HCT116 (cell line): ENCODE measurements at regions of chr7 and their contacts with region 1.

Region 1: DNA sequence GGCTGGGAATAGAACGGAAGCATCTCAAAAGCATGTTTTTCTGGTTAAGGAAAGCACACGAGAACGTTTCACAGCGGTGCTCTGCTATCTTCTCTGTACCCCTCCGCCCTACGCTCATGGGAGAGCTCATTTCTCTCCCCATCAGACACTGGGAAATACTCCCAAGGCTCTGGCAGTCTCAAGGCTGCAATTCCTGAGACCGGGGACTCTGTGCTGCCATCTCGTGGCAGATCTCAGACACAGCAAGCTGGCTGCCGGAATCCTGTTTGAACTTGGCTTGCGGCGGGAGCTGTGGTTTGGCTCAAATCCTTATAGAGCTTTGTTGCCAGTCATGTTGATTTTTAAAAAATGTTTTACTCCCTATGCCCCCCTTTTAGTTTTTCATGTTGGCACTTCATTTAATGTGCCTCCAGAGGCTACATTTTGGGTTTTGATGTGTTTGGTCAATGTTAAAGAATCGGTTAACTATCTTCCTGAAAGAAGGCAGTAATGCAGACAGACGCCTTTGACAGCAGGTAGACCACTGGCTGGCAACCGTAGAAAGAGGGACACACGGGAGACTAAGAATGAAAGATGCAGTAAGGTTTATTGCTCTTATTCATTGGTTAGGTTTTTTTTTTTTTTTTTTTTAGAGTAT is 27.6 kb downstream of the BMPER start:
- DNase-seq: peak; percentile 66
- ATAC-seq: peak; percentile 95
- H3K4me3 ChIP-seq: no peak overlapping the region; a peak in 1 of 4 replicates
- H3K27ac ChIP-seq: no peak overlapping the region
- H3K4me1 ChIP-seq: peaks cover 3 to 8% of the 10 kb centered on the region in 2 experiments; a peak in 3 of 4 replicates
- H3K27me3 ChIP-seq: no peaks in the 10 kb centered on the region; the same call in 1 of the 2 replicates
- CTCF ChIP-seq: peak; percentile 64 to 96 (median 93); a peak in 5 of 6 replicates
- POLR2A ChIP-seq: no peak
- RAD21 ChIP-seq: peak; percentile 74

Region 2: GRCh38 chr7:33185786-33186185 is 747.2 kb before region 1 on chr7:
- CTCF ChIA-PET with region 1: interaction called, 13 read pairs
- POLR2A ChIA-PET with region 1: no interaction called
- RAD21 ChIA-PET with region 1: no interaction called
- intact Hi-C with region 1: loop called (anchors 1 kb)
- DNase-seq: peak; percentile 34
- ATAC-seq: peak; percentile 91
- H3K4me3 ChIP-seq: no peak overlapping the region
- H3K27ac ChIP-seq: no peak overlapping the region
- H3K4me1 ChIP-seq: no peaks in the 10 kb centered on the region
- H3K27me3 ChIP-seq: no peaks in the 10 kb centered on the region
- CTCF ChIP-seq: peak; percentile 49 to 81 (median 65); a peak in 5 of 6 replicates
- POLR2A ChIP-seq: no peak
- RAD21 ChIP-seq: peak; percentile 88

Region 3: GRCh38 chr7:33423646-33424020 is 509.3 kb before region 1 on chr7:
- CTCF ChIA-PET with region 1: interaction called, 4 read pairs
- POLR2A ChIA-PET with region 1: no interaction called
- RAD21 ChIA-PET with region 1: no interaction called
- intact Hi-C with region 1: loop called (anchors 2 kb)
- DNase-seq: peak; percentile 10
- ATAC-seq: no peak
- H3K4me3 ChIP-seq: no peak overlapping the region
- H3K27ac ChIP-seq: no peak overlapping the region
- H3K4me1 ChIP-seq: no peaks in the 10 kb centered on the region
- H3K27me3 ChIP-seq: no peaks in the 10 kb centered on the region
- CTCF ChIP-seq: peak; percentile 34 to 67 (median 58); a peak in 4 of 6 replicates
- POLR2A ChIP-seq: no peak
- RAD21 ChIP-seq: peak; percentile 59

Region 4: GRCh38 chr7:33895025-33895804 is 37.7 kb before region 1 on chr7:
- CTCF ChIA-PET with region 1: interaction called, 14 read pairs
- POLR2A ChIA-PET with region 1: no interaction called
- RAD21 ChIA-PET with region 1: no interaction called
- intact Hi-C with region 1: no loop called
- DNase-seq: peak; percentile 39
- ATAC-seq: peak; percentile 99
- H3K4me3 ChIP-seq: no peak overlapping the region
- H3K27ac ChIP-seq: no peak overlapping the region
- H3K4me1 ChIP-seq: no peaks in the 10 kb centered on the region
- H3K27me3 ChIP-seq: no peaks in the 10 kb centered on the region
- CTCF ChIP-seq: peak; percentile 61 to 94 (median 85)
- POLR2A ChIP-seq: no peak
- RAD21 ChIP-seq: peak; percentile 58

Region 5: DNA sequence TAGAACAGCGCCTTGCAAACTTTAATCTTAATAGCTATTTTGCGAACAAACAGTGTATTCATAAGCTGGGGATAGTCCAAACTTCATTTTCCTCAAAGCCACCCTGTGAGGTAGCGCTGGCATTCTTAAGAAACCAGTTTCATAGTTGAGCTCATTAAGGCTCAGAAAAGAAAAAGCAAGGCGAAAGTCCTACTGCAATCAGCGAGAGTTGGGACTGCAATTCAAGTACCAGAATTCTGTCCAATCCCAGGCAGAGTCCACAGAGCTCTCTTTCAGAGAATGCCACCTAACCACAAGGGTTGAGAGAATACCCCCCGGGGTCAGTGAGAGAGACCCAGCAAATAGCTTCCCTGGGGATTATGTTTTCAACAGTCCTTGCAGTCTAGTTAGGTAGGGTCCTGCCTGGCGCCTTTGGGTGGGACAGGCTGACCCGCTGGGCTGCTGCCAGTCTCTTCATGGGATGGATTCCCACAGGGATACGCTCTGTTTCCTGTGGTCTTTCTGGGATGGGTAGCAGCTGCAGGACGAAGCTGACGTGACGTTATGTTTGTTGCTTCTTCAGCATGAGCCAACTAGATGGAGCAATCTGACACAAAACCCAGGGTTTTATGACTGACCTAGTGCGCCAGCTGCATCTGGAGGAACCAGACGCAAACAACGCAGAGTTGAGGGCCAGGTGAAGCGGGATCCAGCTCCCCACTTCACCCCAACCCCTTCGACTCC is 11.6 kb before region 1 on chr7:
- CTCF ChIA-PET with region 1: interaction called, 19 read pairs
- POLR2A ChIA-PET with region 1: no interaction called
- RAD21 ChIA-PET with region 1: no interaction called
- intact Hi-C with region 1: no loop called
- DNase-seq: no peak
- ATAC-seq: no peak
- H3K4me3 ChIP-seq: no peak overlapping the region
- H3K27ac ChIP-seq: no peak overlapping the region
- H3K4me1 ChIP-seq: no peaks in the 10 kb centered on the region
- H3K27me3 ChIP-seq: peaks cover 12% of the 10 kb centered on the region; the same call in 1 of the 2 replicates
- CTCF ChIP-seq: no peak
- POLR2A ChIP-seq: no peak
- RAD21 ChIP-seq: no peak

Region 6: GRCh38 chr7:34091323-34091917 is 158.5 kb after region 1 on chr7:
- CTCF ChIA-PET with region 1: interaction called, 22 read pairs
- POLR2A ChIA-PET with region 1: no interaction called
- RAD21 ChIA-PET with region 1: interaction called in 1 of 2 experiments, 5 read pairs
- intact Hi-C with region 1: no loop called
- DNase-seq: peak; percentile 43
- ATAC-seq: peak; percentile 66
- H3K4me3 ChIP-seq: no peak overlapping the region
- H3K27ac ChIP-seq: no peak overlapping the region
- H3K4me1 ChIP-seq: no peaks in the 10 kb centered on the region
- H3K27me3 ChIP-seq: no peaks in the 10 kb centered on the region
- CTCF ChIP-seq: peak; percentile 56 to 80 (median 64); a peak in 5 of 6 replicates
- POLR2A ChIP-seq: no peak
- RAD21 ChIP-seq: peak; percentile 82